ENCODE measurements at regions of chr3 and their contacts with region 1.

Region 1: GRCh38 chr3:196568246-196569002 is at the starts of genes FBXO45 and WDR53:
- DNase-seq: peak; percentile 88 to 98 (median 95)
- ATAC-seq: peak; percentile 96
- H3K4me3 ChIP-seq: peak within 1 kb of the TSS; percentile 100
- H3K4me3 Mint-ChIP-seq: peak within 1 kb of the TSS; percentile 87 to 99 (median 95)
- H3K27ac ChIP-seq: peak within 1 kb of the TSS; percentile 87
- H3K27ac Mint-ChIP-seq: peak within 1 kb of the TSS; percentile 91 to 98 (median 96)
- H3K4me1 ChIP-seq: peaks cover 21 to 31% of the 10 kb centered on the region in 2 donors
- H3K4me1 Mint-ChIP-seq: peaks cover 23 to 53% (median 46%) of the 10 kb centered on the region in 7 donors
- H3K27me3 ChIP-seq: no peaks in the 10 kb centered on the region
- H3K27me3 Mint-ChIP-seq: no peaks in the 10 kb centered on the region
- total RNA-seq, gene FBXO45: 2.8 to 15.9 (median 7.1) TPM
- total RNA-seq, gene WDR53: 13.6 to 31.5 (median 22.7) TPM

Region 2: DNA sequence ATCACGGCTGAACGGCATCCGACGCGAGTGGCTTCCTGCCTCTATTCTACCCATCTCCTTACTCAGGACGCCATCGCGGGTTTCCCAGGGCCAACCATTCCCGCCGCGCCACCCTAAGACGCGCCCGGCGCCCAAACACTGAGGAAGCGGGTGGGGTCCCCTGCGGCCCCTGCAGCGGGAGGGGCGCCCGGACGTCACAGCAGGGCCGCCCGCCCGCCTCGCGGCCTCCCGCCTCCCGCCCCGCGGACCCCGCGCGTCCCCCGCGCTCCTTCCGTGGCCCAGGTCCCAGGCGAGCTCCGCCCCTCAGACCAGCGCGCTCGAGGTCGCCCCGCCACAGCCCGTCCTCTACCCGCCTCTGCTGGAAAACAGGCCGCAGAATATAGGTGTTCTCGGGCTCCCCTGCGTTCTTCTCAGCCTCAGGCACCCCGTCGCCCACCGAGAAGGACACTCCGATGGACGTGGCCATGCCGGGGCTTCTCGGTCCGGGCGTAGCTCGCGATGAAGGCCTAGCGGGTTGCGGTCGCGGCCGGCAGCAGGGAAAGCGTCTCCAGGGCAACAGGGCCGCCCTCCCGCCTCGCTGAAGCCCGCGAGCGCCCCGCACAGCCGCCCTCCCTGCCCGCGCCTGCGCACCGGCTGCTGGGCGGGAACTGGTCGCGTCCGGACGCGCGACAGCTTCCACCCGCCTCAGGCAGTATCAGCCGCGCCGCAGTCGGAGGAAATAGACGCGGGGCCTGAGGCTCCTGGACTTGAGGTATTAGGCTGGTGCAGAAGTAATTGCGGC is 250.5 kb before region 1 on chr3 and contains the start of gene DYNLT2B:
- CTCF ChIA-PET with region 1: no interaction called
- POLR2A ChIA-PET with region 1: interaction called, 3 read pairs
- intact Hi-C with region 1: loop called (anchors 1 kb)
- DNase-seq: peak; percentile 82 to 91 (median 88)
- ATAC-seq: peak; percentile 94
- H3K4me3 ChIP-seq: peak within 1 kb of the TSS; percentile 89
- H3K4me3 Mint-ChIP-seq: peak within 1 kb of the TSS; percentile 82 to 95 (median 94)
- H3K27ac ChIP-seq: peak within 1 kb of the TSS; percentile 90
- H3K27ac Mint-ChIP-seq: peak within 1 kb of the TSS; percentile 88 to 98 (median 94)
- H3K4me1 ChIP-seq: no peaks in the 10 kb centered on the region
- H3K4me1 Mint-ChIP-seq: peaks cover 0 to 23% (median 9%) of the 10 kb centered on the region in 7 donors
- H3K27me3 ChIP-seq: no peaks in the 10 kb centered on the region
- H3K27me3 Mint-ChIP-seq: no peaks in the 10 kb centered on the region
- total RNA-seq, gene DYNLT2B: 3.3 to 20.8 (median 5.1) TPM

Region 3: DNA sequence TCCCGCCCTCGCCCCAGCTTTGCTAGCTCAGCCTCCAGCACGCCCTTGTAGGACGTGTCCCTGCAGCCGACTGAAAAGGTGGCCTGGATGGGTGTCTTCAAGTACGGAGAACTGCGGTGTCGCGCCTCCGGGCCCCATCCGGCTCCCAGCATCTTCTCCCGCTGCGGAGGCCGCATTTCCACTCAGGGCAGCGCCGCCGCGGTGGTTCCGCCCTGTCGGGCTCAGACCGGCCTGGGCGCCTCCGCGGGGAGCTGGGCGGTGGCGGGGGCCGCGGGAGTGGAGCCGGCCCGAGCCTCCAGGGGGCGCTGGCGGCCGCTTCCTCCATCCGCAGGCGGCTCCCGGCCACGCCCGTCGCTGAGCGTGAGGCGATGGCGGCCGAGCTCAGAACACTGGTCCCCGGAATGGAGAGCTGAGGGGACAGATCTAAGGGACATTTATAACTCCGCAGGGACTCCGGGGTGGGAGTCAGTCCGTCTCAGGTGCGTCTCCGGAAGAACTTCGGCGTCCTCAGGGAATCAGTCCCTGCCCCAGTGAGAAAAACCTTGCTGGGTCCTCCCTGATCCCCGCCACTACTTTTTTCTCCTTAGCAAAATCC is 39.7 kb before region 1 on chr3:
- CTCF ChIA-PET with region 1: interaction called, 3 read pairs
- POLR2A ChIA-PET with region 1: interaction called, 5 read pairs
- intact Hi-C with region 1: loop called (anchors 1 to 2 kb)
- DNase-seq: peak; percentile 7 to 93 (median 44)
- ATAC-seq: peak; percentile 98
- H3K4me3 ChIP-seq: peak overlapping the region; percentile 57
- H3K4me3 Mint-ChIP-seq: peak overlapping the region in 9 of 10 donors; percentile 42 to 80 (median 66)
- H3K27ac ChIP-seq: no peak overlapping the region
- H3K27ac Mint-ChIP-seq: peak overlapping the region in 2 of 9 donors; percentile 62 to 74
- H3K4me1 ChIP-seq: peaks cover 0 to 3% of the 10 kb centered on the region in 2 donors
- H3K4me1 Mint-ChIP-seq: peaks cover 0 to 17% (median 0%) of the 10 kb centered on the region in 7 donors
- H3K27me3 ChIP-seq: no peaks in the 10 kb centered on the region
- H3K27me3 Mint-ChIP-seq: peaks cover 7 to 16% (median 16%) of the 10 kb centered on the region in 5 donors

Region 4: DNA sequence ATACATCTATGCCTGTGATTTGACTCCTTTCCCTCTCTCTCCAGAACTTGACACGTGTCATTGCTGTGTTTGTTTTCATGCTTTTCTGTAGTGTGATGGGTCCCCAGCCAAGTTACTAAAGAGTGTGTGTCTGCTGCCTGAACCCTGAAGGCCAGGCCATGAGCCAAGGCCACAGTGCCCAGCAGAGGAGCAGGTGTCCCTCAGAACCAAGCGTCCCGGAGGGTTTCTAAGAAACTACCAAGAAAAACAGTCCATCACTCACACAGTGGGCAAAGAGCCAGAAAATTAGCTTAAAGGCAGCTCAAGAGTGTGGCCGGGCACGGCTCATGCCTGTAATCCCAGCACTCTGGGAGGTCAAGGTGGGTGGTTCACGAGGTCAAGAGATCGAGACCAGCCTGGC is 35.3 kb after region 1 on chr3:
- CTCF ChIA-PET with region 1: no interaction called
- POLR2A ChIA-PET with region 1: interaction called, 13 read pairs
- intact Hi-C with region 1: loop called (anchors 2 kb)
- DNase-seq: no peak
- ATAC-seq: no peak
- H3K4me3 ChIP-seq: no peak overlapping the region
- H3K4me3 Mint-ChIP-seq: no peak overlapping the region
- H3K27ac ChIP-seq: no peak overlapping the region
- H3K27ac Mint-ChIP-seq: peak overlapping the region in 4 of 9 donors; percentile 14 to 78 (median 63)
- H3K4me1 ChIP-seq: peaks cover 0 to 4% of the 10 kb centered on the region in 2 donors
- H3K4me1 Mint-ChIP-seq: peaks cover 0 to 18% (median 8%) of the 10 kb centered on the region in 7 donors
- H3K27me3 ChIP-seq: no peaks in the 10 kb centered on the region
- H3K27me3 Mint-ChIP-seq: peaks cover 0 to 5% (median 0%) of the 10 kb centered on the region in 5 donors

Region 5: GRCh38 chr3:196711838-196712513 is 143.6 kb after region 1 on chr3 and contains the starts of genes CEP19 and PIGX:
- CTCF ChIA-PET with region 1: no interaction called
- POLR2A ChIA-PET with region 1: interaction called, 5 read pairs
- intact Hi-C with region 1: loop called (anchors 1 kb)
- DNase-seq: peak; percentile 92 to 97 (median 94)
- ATAC-seq: peak; percentile 92
- H3K4me3 ChIP-seq: peak within 1 kb of the TSS; percentile 79
- H3K4me3 Mint-ChIP-seq: peak within 1 kb of the TSS; percentile 84 to 98 (median 94)
- H3K27ac ChIP-seq: peak within 1 kb of the TSS; percentile 96
- H3K27ac Mint-ChIP-seq: peak within 1 kb of the TSS; percentile 91 to 99 (median 96)
- H3K4me1 ChIP-seq: peaks cover 12 to 14% of the 10 kb centered on the region in 2 donors
- H3K4me1 Mint-ChIP-seq: peaks cover 16 to 42% (median 34%) of the 10 kb centered on the region in 7 donors
- H3K27me3 ChIP-seq: no peaks in the 10 kb centered on the region
- H3K27me3 Mint-ChIP-seq: no peaks in the 10 kb centered on the region
- total RNA-seq, gene CEP19: 0.96 to 8.1 (median 6.9) TPM
- total RNA-seq, gene PIGX: 13.7 to 58.5 (median 17.3) TPM

Region 6: DNA sequence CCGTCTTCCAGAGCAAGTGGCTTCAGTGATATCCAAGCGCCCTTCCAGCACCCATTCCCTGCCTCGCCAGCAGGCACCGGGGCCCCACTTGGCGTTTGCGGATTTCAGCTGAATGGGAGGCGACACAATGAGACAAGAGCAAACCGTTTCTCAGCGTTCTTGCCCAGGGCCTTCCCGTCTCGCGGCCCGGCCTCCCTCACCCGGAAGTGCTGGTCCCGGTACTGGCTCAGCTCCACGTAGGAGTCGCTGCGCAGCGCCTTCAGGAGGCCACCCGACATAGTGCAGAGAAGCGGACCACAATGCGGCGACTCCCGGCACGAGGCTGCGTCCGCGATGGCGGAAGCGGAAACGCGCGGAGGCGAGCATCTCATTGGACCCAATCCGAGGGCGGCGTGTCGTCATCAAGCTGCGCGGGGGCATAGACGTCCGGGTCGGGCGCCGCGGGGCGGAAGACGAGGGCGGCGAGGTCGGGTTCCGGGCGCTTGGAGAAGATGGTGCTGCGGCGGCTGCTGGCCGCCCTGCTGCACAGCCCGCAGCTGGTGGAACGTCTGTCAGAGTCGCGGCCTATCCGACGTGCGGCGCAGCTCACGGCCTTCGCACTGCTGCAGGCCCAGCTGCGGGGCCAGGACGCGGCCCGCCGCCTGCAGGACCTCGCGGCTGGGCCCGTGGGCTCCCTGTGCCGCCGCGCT is 373.9 kb after region 1 on chr3 and contains the start of gene NCBP2:
- CTCF ChIA-PET with region 1: interaction called, 4 read pairs
- POLR2A ChIA-PET with region 1: interaction called, 9 read pairs
- intact Hi-C with region 1: loop called (anchors 1 kb)
- DNase-seq: peak; percentile 98 to 100 (median 99)
- ATAC-seq: peak; percentile 97
- H3K4me3 ChIP-seq: peak within 1 kb of the TSS; percentile 100
- H3K4me3 Mint-ChIP-seq: peak within 1 kb of the TSS; percentile 94 to 99 (median 98)
- H3K27ac ChIP-seq: peak within 1 kb of the TSS; percentile 94
- H3K27ac Mint-ChIP-seq: peak within 1 kb of the TSS; percentile 96 to 100 (median 98)
- H3K4me1 ChIP-seq: peaks cover 16 to 20% of the 10 kb centered on the region in 2 donors
- H3K4me1 Mint-ChIP-seq: peaks cover 30 to 64% (median 49%) of the 10 kb centered on the region in 7 donors
- H3K27me3 ChIP-seq: no peaks in the 10 kb centered on the region
- H3K27me3 Mint-ChIP-seq: peaks cover 0 to 5% (median 0%) of the 10 kb centered on the region in 5 donors
- total RNA-seq, gene NCBP2: 42.9 to 77.3 (median 67.5) TPM